Motor neuron (in vitro differentiated cells): ENCODE measurements at regions of chr18 and their contacts with region 1.

Region 1: GRCh38 chr18:74652392-74652988 is 54.8 kb downstream of the ZNF407 start:
- ATAC-seq: peak in 6 of 8 experiments; percentile 28 to 70 (median 49)
- H3K4me3 ChIP-seq: no peak overlapping the region
- H3K27ac ChIP-seq: no peak overlapping the region
- H3K4me1 ChIP-seq: peaks cover 5 to 46% of the 10 kb centered on the region in 2 donors

Region 2: DNA sequence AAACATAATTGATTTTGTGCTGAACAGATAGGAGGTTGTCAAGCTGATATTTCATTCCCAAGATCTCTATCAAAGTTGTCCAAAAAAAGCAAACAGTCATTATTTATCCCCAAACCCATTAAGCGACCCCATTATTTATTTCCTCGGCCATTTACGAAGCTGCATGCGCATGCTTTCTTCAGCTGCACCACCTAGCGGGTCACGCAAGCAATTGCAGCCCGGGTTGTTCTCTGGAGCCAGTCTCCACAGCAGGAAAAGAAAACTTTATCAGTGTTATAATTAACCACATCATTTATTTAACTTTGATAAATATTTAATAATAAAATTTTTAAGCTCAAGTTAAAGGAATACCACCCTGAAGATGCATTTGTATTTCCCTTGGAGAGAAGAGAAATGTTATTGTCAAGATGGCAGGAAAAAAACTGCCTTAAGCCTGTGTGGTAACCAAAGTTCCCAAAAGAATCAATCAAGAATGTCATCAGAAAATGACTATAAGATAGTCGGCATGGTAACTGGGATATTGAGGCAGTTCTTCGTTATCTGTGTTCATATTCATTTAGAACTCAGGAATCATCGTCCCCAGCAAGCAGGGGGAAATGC is 809.6 kb before region 1 on chr18:
- in situ Hi-C with region 1: no loop called
- ATAC-seq: peak in 6 of 8 experiments; percentile 43 to 71 (median 56)
- H3K4me3 ChIP-seq: no peak overlapping the region
- H3K27ac ChIP-seq: no peak overlapping the region
- H3K4me1 ChIP-seq: peaks cover 11 to 20% of the 10 kb centered on the region in 2 donors

Region 3: DNA sequence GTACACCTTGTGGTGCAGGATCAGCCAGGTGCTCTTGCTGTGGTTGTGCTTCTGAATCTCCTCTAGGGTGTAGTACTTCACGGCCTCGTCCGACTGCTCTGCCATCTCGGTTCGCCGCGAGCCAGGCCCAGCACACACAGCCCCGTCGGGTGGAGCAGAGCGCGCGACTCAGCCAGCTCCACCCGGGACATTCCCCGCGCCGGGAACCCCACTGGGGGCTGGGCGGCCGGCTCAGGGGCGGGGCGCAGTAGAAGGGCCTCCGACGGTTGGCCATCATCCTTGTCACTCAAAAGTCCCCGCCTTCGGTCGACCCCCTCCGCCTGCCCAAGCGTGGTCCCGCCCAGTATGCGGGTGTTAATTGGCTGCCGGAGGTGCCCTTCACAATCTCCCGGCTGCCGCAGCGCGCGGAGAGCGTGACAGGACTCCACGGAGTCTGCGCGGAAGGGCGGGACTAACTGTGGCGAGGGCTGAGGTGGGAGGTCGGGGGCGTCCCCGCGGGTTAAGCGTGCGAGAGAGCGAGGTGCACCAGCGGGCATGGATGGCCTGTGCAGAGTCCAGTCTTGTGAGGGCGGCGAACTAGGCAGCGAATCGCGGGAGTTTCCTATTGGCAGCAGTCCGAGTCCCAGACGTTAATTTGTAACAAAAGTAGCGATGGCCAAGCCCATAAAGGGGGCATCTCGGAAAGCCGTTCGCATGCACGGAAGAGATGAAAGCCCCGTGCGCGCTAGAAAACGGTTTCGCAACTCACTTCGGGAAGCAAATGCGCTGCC is 360.5 kb before region 1 on chr18 and contains the start of gene CYB5A:
- in situ Hi-C with region 1: no loop called
- ATAC-seq: peak; percentile 97 to 99 (median 98)
- H3K4me3 ChIP-seq: peak within 1 kb of the TSS; percentile 53 to 85 (median 76)
- H3K27ac ChIP-seq: no peak within 1 kb of the TSS
- H3K4me1 ChIP-seq: peaks cover 4 to 8% of the 10 kb centered on the region in 2 donors
- total RNA-seq, gene CYB5A: 26.4 to 63.6 (median 35.5) TPM

Region 4: GRCh38 chr18:74963820-74964446 is 311.4 kb after region 1 on chr18:
- in situ Hi-C with region 1: loop called in 1 of 9 experiments (anchors 25 kb)
- ATAC-seq: peak; percentile 34 to 96 (median 70)
- H3K4me3 ChIP-seq: no peak overlapping the region
- H3K27ac ChIP-seq: no peak overlapping the region
- H3K4me1 ChIP-seq: no peaks in the 10 kb centered on the region

Region 5: GRCh38 chr18:75209129-75209950 is 556.9 kb after region 1 on chr18 and contains the start of gene PTGR3:
- in situ Hi-C with region 1: loop called in 3 of 9 experiments (anchors 25 kb)
- ATAC-seq: peak; percentile 41 to 68 (median 62)
- H3K4me3 ChIP-seq: peak within 1 kb of the TSS; percentile 75 to 96 (median 78)
- H3K27ac ChIP-seq: peak within 1 kb of the TSS; percentile 94 to 96
- H3K4me1 ChIP-seq: peaks cover 0 to 8% of the 10 kb centered on the region in 2 donors
- total RNA-seq, gene PTGR3: 9.0 to 41.9 (median 25.4) TPM

Region 6: GRCh38 chr18:75478996-75479880 is 826.7 kb after region 1 on chr18:
- in situ Hi-C with region 1: loop called in 4 of 9 experiments (anchors 25 kb)
- ATAC-seq: peak; percentile 63 to 87 (median 80)
- H3K4me3 ChIP-seq: no peak overlapping the region
- H3K27ac ChIP-seq: no peak overlapping the region
- H3K4me1 ChIP-seq: peaks cover 0 to 20% of the 10 kb centered on the region in 2 donors

Region 7: DNA sequence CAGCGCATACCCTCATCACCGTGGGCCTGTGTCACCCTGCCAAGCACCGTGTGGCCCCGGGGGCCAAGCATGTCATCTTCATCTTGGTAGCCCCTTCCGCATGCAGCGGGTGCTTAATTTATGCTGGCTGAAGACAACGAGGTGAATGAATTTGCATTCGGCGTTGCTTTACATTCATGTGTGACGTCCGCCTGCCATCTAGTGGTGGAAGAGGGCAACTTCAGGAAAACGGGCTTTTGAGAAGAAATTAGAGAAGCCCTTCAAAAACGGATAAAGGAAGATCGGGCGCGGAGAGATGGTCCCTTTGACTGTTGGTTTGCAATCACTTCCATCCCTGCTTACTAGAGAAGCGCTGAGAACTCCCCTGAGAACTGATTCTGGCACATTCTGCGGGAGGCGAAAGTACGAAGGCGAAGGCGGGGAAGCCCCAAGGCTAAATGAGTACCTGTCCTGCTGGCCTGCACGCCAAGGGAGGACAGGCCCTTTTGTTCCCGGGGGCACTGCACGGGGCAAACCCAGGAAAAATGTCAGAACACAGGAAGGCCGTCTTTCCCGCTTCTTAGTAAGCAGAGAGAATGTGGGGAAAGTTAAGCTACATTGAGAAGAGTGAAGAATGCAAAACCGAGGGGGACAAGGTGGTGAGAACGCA is 1696.7 kb after region 1 on chr18:
- in situ Hi-C with region 1: loop called in 4 of 9 experiments (anchors 25 kb)
- ATAC-seq: peak in 7 of 8 experiments; percentile 6 to 60 (median 47)
- H3K4me3 ChIP-seq: no peak overlapping the region
- H3K27ac ChIP-seq: no peak overlapping the region
- H3K4me1 ChIP-seq: peaks cover 9 to 12% of the 10 kb centered on the region in 2 donors